Activated naive CD8-positive, alpha-beta T cell treated with anti-CD3 and anti-CD28 coated beads, Interleukin-2, amount 10 ng/mL, durations not matched to agents 7 days and 5 days (primary cell): ENCODE measurements at regions of chr5 and their contacts with region 1.

Region 1: GRCh38 chr5:181191529-181192394 is 13.2 kb downstream of the TRIM7 start:
- DNase-seq: peak; percentile 97
- ATAC-seq: peak; percentile 56
- H3K4me3 Mint-ChIP-seq: peak overlapping the region; percentile 94
- H3K27ac Mint-ChIP-seq: peak overlapping the region; percentile 96
- H3K4me1 Mint-ChIP-seq: peaks cover 40% of the 10 kb centered on the region
- H3K27me3 Mint-ChIP-seq: peaks cover 4% of the 10 kb centered on the region

Region 2: DNA sequence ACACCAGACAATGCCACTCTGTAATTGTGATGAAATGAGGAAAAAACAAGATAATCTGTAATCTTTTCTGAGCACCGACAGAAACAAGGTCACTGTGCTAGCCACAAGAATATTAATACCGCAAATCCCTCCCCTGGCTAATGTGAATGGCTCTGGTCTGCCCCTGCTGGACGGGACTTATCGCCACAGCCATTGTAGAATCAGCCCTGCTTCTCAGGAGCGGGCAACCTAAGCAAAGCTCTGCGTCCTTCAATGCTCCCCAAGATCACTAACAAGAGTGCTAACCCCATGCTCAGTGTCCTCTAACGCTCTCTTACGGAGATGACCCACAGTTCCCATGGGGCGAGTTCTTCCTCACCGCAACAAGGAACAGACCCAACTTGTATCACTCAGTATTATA is 103.5 kb before region 1 on chr5:
- POLR2A ChIA-PET with region 1: no interaction called
- DNase-seq: no peak
- ATAC-seq: no peak
- H3K4me3 Mint-ChIP-seq: no peak overlapping the region
- H3K27ac Mint-ChIP-seq: no peak overlapping the region
- H3K4me1 Mint-ChIP-seq: no peaks in the 10 kb centered on the region
- H3K27me3 Mint-ChIP-seq: peaks cover 28% of the 10 kb centered on the region

Region 3: DNA sequence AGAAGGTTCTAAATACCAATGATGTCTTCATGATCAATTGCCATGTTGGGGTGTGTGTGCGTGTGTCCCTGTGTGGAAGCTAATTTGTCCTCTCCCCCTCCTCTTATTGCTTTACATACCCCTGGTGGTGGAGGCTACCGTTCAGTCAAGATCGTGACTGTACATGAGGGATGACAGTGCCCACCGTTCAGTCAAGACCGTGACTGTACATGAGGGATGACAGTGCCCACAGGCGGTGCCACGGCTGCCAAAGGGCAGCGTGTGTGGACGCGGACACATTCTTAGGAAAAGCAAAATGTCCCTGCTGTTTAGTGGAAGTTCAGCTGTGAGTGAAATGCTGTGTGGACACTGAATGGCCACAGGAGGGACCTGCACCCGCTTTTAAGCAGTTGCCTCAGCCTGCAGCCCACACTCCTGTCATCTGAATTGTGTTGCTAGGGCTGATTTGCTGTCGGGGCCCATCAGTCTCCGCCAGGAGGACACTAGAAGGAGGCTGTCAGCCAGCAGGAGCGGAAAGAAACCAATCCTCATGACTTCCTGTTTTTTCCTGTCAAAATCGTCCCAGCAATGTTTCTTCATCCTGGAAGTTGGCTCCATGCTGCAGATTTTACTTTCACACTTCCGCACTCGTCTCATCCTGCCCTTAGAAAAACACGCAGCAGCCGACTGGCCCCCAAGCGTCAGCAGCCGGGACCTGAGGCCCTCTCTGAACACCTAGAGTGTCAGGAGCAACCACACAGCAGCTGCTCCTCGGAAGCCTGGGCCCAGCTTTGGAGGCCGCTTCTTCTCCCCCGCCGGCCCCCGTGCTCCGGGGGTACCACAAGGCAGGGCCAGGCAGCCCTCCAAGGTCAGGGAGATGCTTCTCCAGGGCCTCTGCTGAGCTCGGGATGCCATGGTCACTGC is 69.9 kb before region 1 on chr5:
- POLR2A ChIA-PET with region 1: no interaction called
- DNase-seq: no peak
- ATAC-seq: no peak
- H3K4me3 Mint-ChIP-seq: no peak overlapping the region
- H3K27ac Mint-ChIP-seq: no peak overlapping the region
- H3K4me1 Mint-ChIP-seq: peaks cover 4% of the 10 kb centered on the region
- H3K27me3 Mint-ChIP-seq: peaks cover 30% of the 10 kb centered on the region

Region 4: DNA sequence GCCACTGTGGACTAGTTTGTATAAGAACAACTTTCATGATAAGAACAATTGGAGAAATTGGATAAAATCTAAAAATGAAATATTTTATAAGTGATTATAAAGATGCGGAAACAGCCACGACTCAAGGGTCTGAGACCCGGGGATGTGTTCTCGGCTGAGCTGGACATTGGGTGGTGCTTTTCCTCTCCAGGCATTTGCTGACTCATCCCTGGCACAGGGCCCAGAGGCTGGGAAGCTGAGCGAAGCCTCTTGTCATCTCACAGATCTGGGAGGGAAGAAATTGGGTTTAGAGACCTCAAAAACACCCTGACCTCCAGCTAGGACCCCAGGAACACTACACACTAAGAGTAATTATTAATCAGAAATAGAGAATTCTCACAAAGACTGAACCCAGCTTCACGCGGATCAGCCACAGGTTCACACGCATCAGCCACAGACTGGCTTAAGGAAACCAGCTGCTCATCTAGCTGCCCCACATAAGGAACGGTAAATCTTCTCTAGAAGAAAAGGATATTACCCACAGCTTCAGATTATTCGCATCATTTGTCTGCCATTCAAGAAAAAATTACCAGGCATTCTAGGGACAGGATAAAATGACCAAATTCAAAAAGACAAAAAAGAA is 58.0 kb before region 1 on chr5:
- POLR2A ChIA-PET with region 1: no interaction called
- DNase-seq: no peak
- ATAC-seq: no peak
- H3K4me3 Mint-ChIP-seq: no peak overlapping the region
- H3K27ac Mint-ChIP-seq: no peak overlapping the region
- H3K4me1 Mint-ChIP-seq: no peaks in the 10 kb centered on the region
- H3K27me3 Mint-ChIP-seq: peaks cover 38% of the 10 kb centered on the region

Region 5: DNA sequence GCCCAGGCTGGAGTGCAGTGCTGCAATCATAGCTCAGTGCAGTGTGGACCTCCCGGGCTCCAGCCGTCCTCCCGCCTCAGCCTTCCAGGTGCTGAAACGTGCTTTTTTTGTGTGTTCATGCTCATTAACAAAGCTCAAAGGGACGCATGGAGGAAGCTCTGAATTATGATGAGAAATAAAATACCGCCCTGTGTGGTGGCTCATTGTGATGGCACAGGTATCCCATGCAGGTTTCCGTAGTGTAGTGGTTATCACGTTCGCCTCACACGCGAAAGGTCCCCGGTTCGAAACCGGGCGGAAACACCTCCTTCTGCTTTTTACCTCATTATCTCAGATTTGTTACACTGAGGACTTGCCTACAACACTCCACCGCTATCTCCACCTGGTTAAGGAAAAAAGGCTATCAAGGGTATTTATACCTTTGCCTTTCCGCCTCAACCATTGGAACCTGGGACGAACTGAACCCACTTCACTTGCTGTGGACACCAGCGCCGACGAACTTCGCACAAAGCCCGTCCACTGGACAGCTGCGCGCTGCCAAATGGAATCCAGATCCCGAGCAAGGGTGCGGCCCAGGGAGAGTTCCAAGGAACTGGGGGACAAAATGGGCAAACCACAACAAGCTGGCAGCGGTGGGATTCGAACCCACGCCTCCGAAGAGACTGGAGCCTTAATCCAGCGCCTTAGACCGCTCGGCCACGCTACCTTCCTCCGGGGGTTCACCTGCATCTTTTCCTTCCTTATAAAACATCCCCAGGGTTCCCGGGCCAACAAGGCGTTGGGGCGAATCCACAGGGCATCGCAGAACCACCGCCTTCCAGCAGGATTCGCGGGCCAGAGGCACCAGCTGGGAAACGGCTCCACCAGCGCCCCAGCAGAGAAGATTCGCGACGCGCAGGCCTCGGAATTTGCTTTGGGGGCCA is 18.1 kb before region 1 on chr5:
- POLR2A ChIA-PET with region 1: interaction called, 12 read pairs
- DNase-seq: peak; percentile 70
- ATAC-seq: peak; percentile 82
- H3K4me3 Mint-ChIP-seq: peak overlapping the region; percentile 97
- H3K27ac Mint-ChIP-seq: peak overlapping the region; percentile 98
- H3K4me1 Mint-ChIP-seq: peaks cover 38% of the 10 kb centered on the region
- H3K27me3 Mint-ChIP-seq: peaks cover 18% of the 10 kb centered on the region

Region 6: GRCh38 chr5:181207214-181208107 is 15.7 kb after region 1 on chr5:
- POLR2A ChIA-PET with region 1: interaction called, 131 read pairs
- DNase-seq: peak; percentile 77
- ATAC-seq: peak; percentile 58
- H3K4me3 Mint-ChIP-seq: peak overlapping the region; percentile 86
- H3K27ac Mint-ChIP-seq: peak overlapping the region; percentile 87
- H3K4me1 Mint-ChIP-seq: peaks cover 29% of the 10 kb centered on the region
- H3K27me3 Mint-ChIP-seq: peaks cover 27% of the 10 kb centered on the region

Region 7: DNA sequence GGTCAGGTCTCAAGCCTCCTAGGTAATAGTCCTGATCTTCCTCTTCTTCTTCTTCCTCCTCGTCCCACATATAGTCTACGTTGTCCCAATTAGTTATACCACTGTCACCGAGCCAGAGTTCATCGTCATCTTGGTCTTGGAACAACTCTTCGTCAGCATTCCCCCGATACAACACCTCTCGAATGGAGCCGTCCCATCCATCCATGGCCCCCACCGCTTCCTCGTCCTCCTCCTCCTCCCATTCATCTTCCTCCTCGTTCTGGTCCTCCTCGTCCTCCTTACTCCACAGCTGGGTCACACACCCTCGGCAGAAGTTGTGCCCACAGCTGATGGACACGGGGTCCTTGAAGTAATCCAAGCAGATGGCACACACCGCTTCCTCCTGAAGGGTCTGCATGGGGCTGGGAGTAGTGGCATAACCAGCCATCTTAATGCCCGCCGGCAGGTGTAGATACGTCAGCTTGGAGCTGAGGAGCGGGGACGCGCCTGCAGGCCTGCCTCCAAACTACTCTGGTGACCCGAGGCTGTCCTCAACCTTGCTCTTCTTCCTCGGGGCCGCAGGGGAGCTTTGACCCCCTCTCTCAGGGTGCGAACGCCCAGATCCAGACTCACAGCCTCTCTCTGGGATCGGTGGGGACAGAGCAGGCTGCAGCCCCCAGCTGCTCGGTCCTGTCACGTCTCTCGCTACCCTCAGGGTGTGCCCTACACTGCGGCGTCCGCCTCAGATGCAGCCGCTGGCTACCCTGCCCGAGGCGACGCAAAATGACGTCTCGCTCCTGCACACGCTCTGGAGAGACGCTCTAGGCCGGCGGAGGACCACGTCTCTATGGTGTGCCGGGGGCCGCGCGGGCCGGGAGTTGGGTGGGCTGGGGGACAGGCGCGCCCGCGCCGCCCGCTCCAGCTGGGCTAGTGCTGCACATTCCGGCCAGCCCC is 68.9 kb after region 1 on chr5 and contains the start of gene TRIM52:
- POLR2A ChIA-PET with region 1: interaction called, 73 read pairs
- DNase-seq: peak; percentile 91
- ATAC-seq: peak; percentile 86
- H3K4me3 Mint-ChIP-seq: peak within 1 kb of the TSS; percentile 97
- H3K27ac Mint-ChIP-seq: peak within 1 kb of the TSS; percentile 93
- H3K4me1 Mint-ChIP-seq: peaks cover 38% of the 10 kb centered on the region
- H3K27me3 Mint-ChIP-seq: no peaks in the 10 kb centered on the region
- total RNA-seq, gene TRIM52: 43.0 to 43.5 TPM